SK-N-SH (cell line): ENCODE measurements at regions of chr17 and their contacts with region 1.

Region 1: GRCh38 chr17:39573447-39574298 is 34.0 kb downstream of the NEUROD2 start:
- DNase-seq: peak; percentile 96
- H3K4me3 ChIP-seq: peak overlapping the region; percentile 63 to 68
- H3K27ac ChIP-seq: peak overlapping the region; percentile 68 to 77; a peak in 3 of 4 replicates
- H3K4me1 ChIP-seq: peaks cover 0 to 8% of the 10 kb centered on the region in 2 experiments; a peak in 1 of 4 replicates
- H3K27me3 ChIP-seq: no peaks in the 10 kb centered on the region
- CTCF ChIP-seq: no peak
- EP300 ChIP-seq: no peak; a peak in 1 of 4 replicates
- RAD21 ChIP-seq: no peak

Region 2: GRCh38 chr17:39473310-39473709 is 100.4 kb before region 1 on chr17:
- CTCF ChIA-PET with region 1: no interaction called
- POLR2A ChIA-PET with region 1: no interaction called
- DNase-seq: no peak
- H3K4me3 ChIP-seq: no peak overlapping the region
- H3K27ac ChIP-seq: no peak overlapping the region
- H3K4me1 ChIP-seq: no peaks in the 10 kb centered on the region
- H3K27me3 ChIP-seq: no peaks in the 10 kb centered on the region
- CTCF ChIP-seq: no peak
- EP300 ChIP-seq: no peak
- RAD21 ChIP-seq: no peak

Region 3: GRCh38 chr17:39556427-39556826 is 17.2 kb before region 1 on chr17:
- CTCF ChIA-PET with region 1: interaction called, 17 read pairs
- POLR2A ChIA-PET with region 1: interaction called, 3 read pairs
- DNase-seq: no peak
- H3K4me3 ChIP-seq: no peak overlapping the region
- H3K27ac ChIP-seq: no peak overlapping the region
- H3K4me1 ChIP-seq: peaks cover 0 to 12% of the 10 kb centered on the region in 2 experiments; a peak in 1 of 4 replicates
- H3K27me3 ChIP-seq: no peaks in the 10 kb centered on the region
- CTCF ChIP-seq: no peak
- EP300 ChIP-seq: no peak
- RAD21 ChIP-seq: no peak

Region 4: DNA sequence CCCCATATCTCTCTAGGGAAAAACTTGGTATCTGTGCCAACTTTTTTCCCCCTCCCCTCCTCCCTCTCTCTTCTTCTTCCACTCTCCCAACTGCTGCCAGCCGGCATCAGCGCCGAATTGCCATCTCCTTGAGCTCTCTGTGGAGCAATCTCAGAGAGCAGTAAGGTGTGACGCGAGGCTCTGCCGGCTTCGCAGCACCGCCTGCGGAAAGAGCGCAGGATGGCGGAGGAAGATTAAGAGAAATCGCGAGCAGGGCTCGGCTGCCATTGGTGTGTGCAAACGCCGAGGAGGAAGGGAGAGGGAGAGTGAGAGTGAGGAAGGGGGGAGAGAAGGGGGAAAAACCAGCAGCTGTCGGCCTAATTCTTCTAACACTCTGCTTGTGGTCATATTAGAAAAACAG is 10.2 kb before region 1 on chr17:
- CTCF ChIA-PET with region 1: interaction called, 37 read pairs
- POLR2A ChIA-PET with region 1: interaction called, 3 read pairs
- DNase-seq: peak; percentile 55
- H3K4me3 ChIP-seq: no peak overlapping the region
- H3K27ac ChIP-seq: no peak overlapping the region
- H3K4me1 ChIP-seq: peaks cover 0 to 7% of the 10 kb centered on the region in 2 experiments; a peak in 1 of 4 replicates
- H3K27me3 ChIP-seq: no peaks in the 10 kb centered on the region
- CTCF ChIP-seq: no peak
- EP300 ChIP-seq: no peak
- RAD21 ChIP-seq: no peak

Region 5: DNA sequence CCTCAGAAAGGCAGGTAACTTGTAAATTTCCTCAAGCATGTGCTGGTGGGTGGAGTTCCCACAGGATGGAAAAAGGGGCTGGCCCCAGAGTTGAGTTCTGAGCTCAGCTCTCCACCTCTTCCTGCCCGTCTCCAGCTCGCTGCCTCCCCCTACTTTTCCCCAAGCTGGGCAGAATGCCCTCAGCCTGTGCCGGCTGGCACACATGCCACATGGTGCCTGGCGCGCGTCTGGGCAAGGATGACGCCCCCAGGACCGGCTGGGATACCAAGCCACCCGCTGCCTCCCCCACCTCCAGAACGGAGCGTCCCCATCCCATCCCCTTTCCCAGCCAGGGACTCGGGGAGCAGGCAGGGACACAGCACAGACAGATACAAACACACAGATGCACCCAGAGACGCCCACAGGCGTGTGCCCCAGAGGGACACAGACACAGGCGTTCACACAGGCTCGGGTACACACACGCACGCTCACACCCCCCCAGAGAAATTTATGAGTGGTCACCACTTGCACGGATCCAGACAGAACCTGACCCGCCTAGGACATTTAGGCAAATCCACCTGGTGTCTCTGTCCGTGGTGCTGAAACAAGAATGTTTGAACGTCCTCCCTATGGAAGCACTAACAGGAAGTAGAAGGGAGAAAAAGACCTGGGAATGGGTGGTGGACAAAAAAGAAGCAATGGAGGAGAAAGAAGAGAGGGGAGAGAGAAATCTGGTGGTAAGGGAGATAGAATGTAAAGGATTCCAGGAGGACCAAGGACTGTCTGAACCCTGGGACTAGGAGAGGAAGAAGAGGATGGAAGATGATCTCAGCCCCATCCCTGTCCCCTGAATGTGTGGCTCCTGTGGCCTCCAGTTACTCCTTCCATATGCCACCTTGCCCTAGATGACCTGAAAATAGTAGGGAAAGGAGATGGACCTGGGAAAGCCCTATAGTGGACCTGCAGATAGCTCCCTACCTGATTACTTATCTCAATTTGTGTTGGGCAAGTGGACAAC is 18.6 kb after region 1 on chr17:
- CTCF ChIA-PET with region 1: interaction called, 15 read pairs
- POLR2A ChIA-PET with region 1: no interaction called
- DNase-seq: peak; percentile 62
- H3K4me3 ChIP-seq: no peak overlapping the region
- H3K27ac ChIP-seq: no peak overlapping the region
- H3K4me1 ChIP-seq: peaks cover 0 to 5% of the 10 kb centered on the region in 2 experiments; a peak in 1 of 4 replicates
- H3K27me3 ChIP-seq: peaks cover 28% of the 10 kb centered on the region
- CTCF ChIP-seq: no peak
- EP300 ChIP-seq: no peak
- RAD21 ChIP-seq: no peak

Region 6: DNA sequence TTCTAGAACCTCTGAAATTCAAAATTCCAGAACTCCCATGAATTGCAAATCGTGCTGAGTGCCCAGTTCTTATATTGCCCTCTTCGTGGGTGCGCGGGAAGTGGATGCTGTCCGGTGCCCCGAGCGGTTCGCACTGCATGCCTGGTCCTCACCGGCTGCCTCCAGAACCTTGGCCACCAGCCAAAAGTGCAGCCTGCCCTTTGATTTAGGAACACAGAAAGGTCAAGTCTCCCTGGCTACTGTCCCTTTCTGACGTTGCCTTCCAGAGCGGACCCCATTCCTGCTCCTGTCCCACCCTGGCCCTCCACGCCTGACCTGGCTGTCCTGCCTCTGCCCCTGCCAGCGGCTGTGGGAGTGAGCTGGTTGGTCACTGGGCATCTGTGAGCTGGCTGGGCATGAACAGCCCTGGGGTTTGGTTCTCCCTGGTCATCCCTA is 24.4 kb after region 1 on chr17:
- CTCF ChIA-PET with region 1: interaction called, 15 read pairs
- POLR2A ChIA-PET with region 1: no interaction called
- DNase-seq: peak; percentile 74
- H3K4me3 ChIP-seq: no peak overlapping the region
- H3K27ac ChIP-seq: no peak overlapping the region
- H3K4me1 ChIP-seq: peaks cover 7 to 32% of the 10 kb centered on the region in 2 experiments
- H3K27me3 ChIP-seq: peaks cover 84% of the 10 kb centered on the region
- CTCF ChIP-seq: no peak
- EP300 ChIP-seq: no peak
- RAD21 ChIP-seq: no peak

Region 7: GRCh38 chr17:39612291-39612894 is 38.7 kb after region 1 on chr17:
- CTCF ChIA-PET with region 1: interaction called, 10 read pairs
- POLR2A ChIA-PET with region 1: no interaction called
- DNase-seq: no peak
- H3K4me3 ChIP-seq: no peak overlapping the region
- H3K27ac ChIP-seq: no peak overlapping the region
- H3K4me1 ChIP-seq: peaks cover 0 to 2% of the 10 kb centered on the region in 2 experiments; a peak in 1 of 4 replicates
- H3K27me3 ChIP-seq: peaks cover 39% of the 10 kb centered on the region
- CTCF ChIP-seq: no peak
- EP300 ChIP-seq: no peak
- RAD21 ChIP-seq: no peak

Region 8: DNA sequence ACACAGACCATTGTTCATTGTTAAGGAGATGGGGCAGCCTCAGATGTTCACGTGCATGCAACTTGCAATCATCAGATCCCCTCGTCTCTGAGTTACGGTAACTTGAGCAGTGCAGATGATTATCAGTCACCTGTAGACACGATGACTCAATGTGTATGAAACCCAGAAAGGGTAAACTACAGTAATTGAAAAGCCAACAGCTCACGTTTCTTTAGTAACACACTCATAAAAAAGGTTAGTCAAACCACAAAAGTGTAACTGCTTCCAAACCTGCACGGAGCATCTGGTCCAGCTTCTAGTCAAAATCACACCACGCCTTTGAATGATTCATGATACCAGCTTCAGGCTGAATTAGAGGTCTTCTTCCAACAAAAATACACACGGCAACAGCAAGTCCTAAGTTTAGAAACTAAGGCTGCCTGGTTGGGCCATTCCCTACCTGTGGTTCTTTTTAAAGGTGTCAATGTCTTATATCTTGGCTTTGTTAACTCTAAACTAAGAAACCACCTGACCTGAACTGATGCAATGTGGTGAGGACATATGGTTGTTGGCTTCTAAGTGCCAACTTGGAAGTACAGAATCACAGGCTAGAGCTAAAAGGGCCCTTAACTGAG is 196.4 kb after region 1 on chr17:
- CTCF ChIA-PET with region 1: no interaction called
- POLR2A ChIA-PET with region 1: no interaction called
- DNase-seq: no peak
- H3K4me3 ChIP-seq: no peak overlapping the region
- H3K27ac ChIP-seq: no peak overlapping the region
- H3K4me1 ChIP-seq: no peaks in the 10 kb centered on the region
- H3K27me3 ChIP-seq: peaks cover 93% of the 10 kb centered on the region
- CTCF ChIP-seq: no peak
- EP300 ChIP-seq: no peak
- RAD21 ChIP-seq: no peak